IMR-90 (cell line): ENCODE measurements at regions of chr20 and their contacts with region 1.

Region 1: DNA sequence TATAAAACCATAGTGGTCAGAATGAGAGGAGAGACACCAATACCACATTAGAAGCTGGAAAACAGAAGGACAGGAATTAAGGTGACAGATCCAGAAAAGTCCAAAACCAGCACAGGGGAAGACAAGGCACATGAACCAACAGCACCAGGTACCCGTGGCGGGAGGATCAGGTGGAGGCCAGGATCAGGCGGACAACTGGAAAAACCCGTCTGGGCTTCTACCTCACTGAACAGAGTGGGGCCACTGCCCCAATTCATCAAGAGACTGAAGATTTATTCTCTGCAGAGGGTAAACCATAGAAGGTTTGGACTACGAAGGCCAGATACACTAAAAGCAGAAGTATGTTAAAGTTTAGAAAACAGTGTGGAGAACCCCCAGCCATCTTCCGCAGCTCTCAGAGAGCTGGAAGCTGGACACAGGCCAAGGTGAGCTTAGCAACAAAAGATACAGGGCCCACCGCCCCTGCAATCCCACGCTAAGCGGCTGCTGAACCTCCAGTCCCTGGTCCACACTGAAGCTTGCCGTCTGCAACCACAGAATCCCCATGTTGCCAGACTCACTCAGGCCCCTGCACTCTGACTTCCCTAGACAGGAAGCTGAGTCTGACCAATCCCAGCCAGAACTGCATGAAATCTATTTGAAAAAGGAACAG is 29.9 kb downstream of the ABHD12 start:
- DNase-seq: peak; percentile 82
- ATAC-seq: peak; percentile 92
- H3K4me3 ChIP-seq: peak overlapping the region; percentile 18; the same call in 1 of the 2 replicates
- H3K27ac ChIP-seq: peak overlapping the region; percentile 98
- H3K4me1 ChIP-seq: peaks cover 19% of the 10 kb centered on the region
- H3K27me3 ChIP-seq: no peaks in the 10 kb centered on the region
- CTCF ChIP-seq: no peak
- POLR2A ChIP-seq: no peak
- RAD21 ChIP-seq: no peak

Region 2: DNA sequence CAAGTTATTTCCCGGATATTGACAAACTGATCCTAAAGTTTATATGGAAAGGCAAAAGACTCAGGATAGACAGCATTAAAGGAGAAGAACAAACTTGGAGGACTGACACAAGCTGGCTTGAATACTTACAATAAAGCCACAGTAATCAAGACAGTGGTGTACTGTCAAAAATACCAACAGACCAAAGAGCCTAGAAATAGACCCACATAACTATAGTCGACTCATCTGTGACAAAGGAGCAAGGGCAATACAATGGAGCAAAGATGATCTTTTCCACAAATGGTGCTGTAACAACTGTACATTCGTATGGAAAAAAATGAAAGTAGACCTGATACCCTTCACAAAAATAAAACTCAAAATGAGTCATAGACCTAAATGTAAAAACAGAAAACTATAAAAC is 16.1 kb before region 1 on chr20:
- CTCF ChIA-PET with region 1: interaction called, 3 read pairs
- POLR2A ChIA-PET with region 1: no interaction called
- dilution Hi-C with region 1: no loop called
- in situ Hi-C with region 1: no loop called
- intact Hi-C with region 1: loop called (anchors 2 kb)
- DNase-seq: peak; percentile 18
- ATAC-seq: no peak; the same call in 1 of the 2 replicates
- H3K4me3 ChIP-seq: no peak overlapping the region
- H3K27ac ChIP-seq: no peak overlapping the region
- H3K4me1 ChIP-seq: peaks cover 3% of the 10 kb centered on the region
- H3K27me3 ChIP-seq: no peaks in the 10 kb centered on the region
- CTCF ChIP-seq: no peak
- POLR2A ChIP-seq: no peak
- RAD21 ChIP-seq: no peak

Region 3: DNA sequence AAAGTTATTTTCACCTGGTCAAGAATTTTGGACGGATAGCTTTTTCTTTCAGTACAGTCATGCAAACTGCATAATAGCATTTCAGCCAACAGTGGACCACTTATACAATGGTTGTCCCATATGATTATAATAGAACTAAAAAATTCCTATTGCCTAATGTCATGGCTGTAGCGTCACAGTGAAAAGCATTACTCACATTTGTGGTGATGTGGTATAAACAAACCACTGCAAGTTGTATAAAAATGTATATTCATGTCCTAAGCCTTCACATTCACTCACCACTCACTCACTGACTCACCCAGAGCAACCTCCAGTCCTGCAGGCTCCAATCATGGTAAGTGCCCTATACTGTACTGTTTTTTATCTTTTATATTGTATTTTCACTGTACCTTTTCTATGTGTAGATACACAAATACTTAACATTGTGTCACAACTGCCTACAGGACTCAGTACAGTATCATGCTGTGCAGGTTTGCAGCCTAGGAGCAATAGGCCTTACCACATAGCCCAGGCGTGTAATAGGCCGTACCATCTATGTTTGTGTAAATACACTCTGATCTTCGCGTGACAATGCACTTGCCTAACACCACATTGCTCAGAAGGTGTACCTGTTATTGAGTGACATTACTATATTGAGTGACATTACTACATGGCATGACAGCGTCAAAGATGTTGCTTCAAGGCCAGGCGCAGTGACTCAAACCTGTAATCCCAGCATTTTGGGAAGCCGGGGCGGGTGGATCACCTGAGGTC is 12.0 kb after region 1 on chr20:
- CTCF ChIA-PET with region 1: interaction called, 3 read pairs
- POLR2A ChIA-PET with region 1: no interaction called
- dilution Hi-C with region 1: no loop called
- in situ Hi-C with region 1: no loop called
- intact Hi-C with region 1: loop called (anchors 1 kb)
- DNase-seq: peak; percentile 99
- ATAC-seq: peak; percentile 95
- H3K4me3 ChIP-seq: no peak overlapping the region
- H3K27ac ChIP-seq: peak overlapping the region; percentile 94
- H3K4me1 ChIP-seq: peaks cover 11% of the 10 kb centered on the region
- H3K27me3 ChIP-seq: no peaks in the 10 kb centered on the region
- CTCF ChIP-seq: no peak
- POLR2A ChIP-seq: no peak
- RAD21 ChIP-seq: no peak

Region 4: GRCh38 chr20:25553819-25554296 is 193.1 kb after region 1 on chr20:
- CTCF ChIA-PET with region 1: no interaction called
- POLR2A ChIA-PET with region 1: no interaction called
- dilution Hi-C with region 1: no loop called
- in situ Hi-C with region 1: no loop called
- intact Hi-C with region 1: no loop called
- DNase-seq: peak; percentile 67
- ATAC-seq: peak; percentile 74
- H3K4me3 ChIP-seq: no peak overlapping the region
- H3K27ac ChIP-seq: no peak overlapping the region
- H3K4me1 ChIP-seq: peaks cover 24% of the 10 kb centered on the region
- H3K27me3 ChIP-seq: no peaks in the 10 kb centered on the region
- CTCF ChIP-seq: no peak
- POLR2A ChIP-seq: no peak
- RAD21 ChIP-seq: no peak